ENCODE measurements at regions of chr17 and their contacts with region 1.

Region 1: DNA sequence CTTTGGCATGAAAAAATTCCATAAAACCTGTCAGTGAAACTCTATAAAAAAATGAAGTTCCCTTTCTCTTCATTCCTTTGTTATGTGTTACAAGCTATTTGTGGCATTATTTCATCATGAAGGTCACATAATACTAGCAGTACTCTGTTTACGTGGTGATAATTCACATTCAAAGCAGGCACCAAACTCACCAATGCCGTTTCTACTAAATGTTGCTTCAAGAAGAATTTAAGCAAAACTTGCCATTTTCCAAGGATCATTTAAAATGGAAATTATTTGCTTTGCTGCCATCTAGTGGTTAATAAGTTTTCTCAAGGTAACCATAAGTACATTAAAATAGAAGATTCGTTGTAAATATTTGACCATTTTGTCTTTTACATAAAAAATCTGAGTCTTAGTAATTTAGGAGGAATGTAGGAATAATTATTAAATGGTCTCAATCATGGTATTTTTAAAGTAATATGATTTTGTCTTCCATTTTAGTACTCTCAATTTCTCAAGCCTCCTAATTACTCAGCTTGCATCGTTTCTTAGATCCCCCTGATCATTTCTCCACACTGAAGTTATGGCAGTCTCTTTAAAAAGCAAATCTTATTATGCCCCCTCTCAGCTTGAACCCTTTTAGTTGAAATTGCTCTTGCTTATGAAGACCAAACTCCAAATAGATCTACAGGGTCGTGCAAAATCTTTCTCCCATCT is 80.8 kb downstream of the OMG start:
- DNase-seq: no peak
- ATAC-seq: no peak

Region 2: DNA sequence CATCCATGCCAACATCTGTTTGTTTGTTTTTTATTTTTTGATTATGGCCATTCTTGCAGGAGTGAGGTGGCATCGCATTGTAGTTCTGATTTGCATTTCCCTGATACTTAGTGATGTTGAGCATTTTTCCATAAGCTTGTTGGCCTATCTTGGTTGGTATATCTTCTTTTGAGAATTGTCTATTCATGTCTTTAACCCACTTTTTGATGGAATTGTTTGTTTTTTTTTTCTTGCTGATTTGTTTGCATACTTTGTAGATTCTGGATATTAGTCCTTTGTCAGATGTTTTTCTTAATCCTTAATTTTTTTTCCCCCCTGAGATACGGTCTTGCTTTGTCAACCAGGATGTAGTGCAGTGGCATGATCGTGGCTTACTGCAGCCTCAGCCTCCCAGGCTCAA is 202.4 kb before region 1 on chr17:
- intact Hi-C with region 1: loop called (anchors 2 kb)
- DNase-seq: no peak
- ATAC-seq: no peak

Region 3: DNA sequence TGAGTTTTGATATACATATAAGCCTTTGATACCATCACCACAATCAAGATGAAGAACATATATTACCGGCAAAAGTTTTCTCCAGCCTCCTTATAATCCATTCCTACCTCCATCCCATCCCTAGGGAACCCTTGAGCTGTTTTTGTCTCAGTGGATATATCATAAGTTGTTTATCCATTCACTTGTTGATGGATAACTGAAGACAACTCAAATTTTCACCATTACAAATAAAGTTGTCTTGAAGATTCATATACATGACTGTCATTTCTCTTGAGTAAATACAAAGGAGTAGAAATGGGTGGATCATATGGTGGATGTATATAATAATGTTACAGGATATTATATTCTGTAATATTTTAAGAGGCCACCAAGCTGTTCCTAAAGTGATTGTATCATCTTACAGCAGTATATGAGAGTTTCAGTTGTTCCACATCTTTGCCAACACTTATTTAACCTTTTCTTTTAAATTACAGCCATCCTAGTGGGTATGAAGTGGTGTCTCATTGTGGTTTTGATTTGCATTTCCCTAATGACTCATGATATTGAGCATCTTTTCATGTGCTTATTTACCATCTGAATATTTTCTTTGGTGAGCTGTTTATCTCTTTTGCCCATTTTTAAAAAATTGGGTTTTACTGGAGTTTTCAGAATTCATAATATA is 104.1 kb before region 1 on chr17:
- intact Hi-C with region 1: no loop called
- DNase-seq: no peak
- ATAC-seq: no peak

Measured in Right ventricle myocardium superior (tissue), 1 donor.